Head of caudate nucleus (tissue), 42 donors: ENCODE measurements at regions of chr15 and their contacts with region 1.

Region 1: GRCh38 chr15:88834211-88834812 is 31.1 kb downstream of the ACAN start:
- DNase-seq: peak; percentile 46 to 84 (median 69)

Region 2: DNA sequence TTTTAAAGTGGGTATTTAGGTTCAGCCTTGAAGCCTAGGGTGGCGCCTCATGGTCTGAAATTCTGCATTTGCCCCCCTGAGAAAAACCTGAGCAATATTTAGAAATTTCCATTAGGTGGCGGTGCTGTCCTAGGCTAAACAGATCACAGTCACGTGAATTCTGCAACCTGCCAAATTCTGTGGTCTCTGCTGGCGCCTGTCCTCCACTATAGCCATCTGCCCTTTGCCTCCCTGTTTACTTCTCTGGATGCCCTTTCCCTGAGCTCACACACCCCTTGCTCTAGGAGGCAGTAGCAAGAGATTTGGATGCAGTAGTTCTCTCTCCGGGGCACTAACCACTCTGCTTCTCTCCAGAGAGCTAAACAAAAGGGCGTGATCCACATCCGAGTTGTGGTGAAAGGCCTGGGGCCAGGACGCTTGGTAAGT is 357.7 kb before region 1 on chr15:
- intact Hi-C with region 1: loop called (anchors 10 kb)
- DNase-seq: peak in 37 of 42 donors; percentile 18 to 82 (median 55)

Region 3: DNA sequence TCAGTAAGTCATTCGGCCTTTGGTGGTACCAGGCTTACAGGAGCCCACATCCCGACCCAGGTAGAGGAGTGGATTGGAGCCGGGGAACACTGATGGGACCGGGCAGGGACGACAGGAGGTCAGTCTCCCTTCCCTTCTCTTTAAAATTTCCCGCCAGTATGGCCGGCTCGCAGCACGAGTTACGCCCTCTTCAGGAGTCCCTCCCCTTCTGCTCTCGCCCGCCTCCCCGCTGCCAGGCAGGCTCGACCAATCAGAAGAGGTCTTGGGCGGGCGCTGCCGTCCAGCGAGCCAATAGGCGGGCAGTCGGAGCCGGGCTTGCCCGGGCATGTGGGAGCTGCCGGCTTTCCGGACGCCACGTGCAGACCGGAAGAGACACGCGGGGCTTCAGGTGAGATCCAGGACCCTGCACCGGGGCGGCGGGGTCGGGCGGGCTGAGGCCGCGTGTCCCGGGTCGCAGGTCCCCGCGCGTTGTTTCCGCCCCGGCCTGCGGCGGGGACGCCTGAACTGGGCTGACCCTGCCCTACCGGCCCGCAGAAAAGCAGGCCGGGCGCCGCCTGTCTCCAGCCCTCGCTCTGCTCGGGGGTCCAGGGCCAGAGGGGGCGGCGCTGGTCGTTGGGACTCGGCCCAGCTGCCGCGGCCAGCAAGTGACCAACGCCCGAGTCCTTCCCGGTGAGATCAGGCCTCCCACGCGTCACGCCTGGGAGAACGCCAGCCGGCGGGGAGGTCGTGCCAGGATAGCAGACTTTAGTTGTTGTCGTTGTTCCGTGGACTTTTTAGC is 213.1 kb before region 1 on chr15 and contains the start of gene AEN:
- intact Hi-C with region 1: loop called (anchors 5 kb)
- DNase-seq: peak; percentile 90 to 98 (median 97)

Region 4: GRCh38 chr15:88657326-88658069 is 176.8 kb before region 1 on chr15:
- intact Hi-C with region 1: loop called (anchors 10 kb)
- DNase-seq: peak in 31 of 42 donors; percentile 33 to 76 (median 52)